ENCODE measurements at regions of chr15 and their contacts with region 1.

Region 1: DNA sequence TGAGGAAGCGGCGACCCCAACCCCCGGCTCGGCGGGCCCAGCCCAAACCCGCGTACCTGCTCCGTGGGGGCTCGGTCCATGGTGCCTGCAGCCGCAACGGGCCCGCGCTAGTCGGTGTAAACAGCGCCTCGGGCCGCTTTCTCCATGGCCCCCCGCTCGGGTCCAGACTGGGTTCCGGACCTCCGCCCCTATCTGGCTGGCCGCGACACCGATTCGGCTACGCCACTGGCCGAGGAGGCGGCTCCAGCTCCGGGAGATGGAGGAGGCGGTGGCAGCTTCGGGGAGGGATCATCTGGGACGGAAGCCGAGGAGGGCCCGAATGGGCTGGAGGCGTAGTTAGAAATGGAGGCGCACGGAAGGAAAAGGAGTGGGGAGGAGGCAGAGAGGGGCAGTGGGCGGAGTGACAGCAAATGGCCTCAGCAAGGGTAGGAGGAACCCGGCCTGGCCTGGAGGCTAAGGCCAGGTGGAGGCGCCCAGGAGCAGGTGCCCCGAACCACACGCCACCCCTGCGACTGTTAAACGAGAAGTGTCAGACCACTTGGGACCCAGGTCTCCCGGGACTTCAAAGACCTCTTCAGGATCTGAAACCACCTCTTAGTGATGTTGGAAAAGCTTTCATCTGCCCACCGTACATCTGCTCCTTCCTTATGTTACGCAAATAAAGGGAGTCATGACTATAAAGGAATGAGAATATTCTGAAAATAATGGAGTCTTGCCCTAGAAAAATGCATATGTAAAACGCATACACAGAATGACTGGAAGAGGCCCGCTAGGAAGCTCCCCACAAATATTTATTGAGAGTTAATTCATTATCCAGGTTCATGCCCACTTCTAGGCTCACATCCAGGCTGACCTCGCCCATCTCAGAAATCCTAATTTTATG is at the start of gene SECISBP2L:
- DNase-seq: peak; percentile 82
- ATAC-seq: peak; percentile 97
- H3K4me3 Mint-ChIP-seq: peak within 1 kb of the TSS; percentile 97
- H3K27ac Mint-ChIP-seq: peak within 1 kb of the TSS; percentile 95
- H3K4me1 Mint-ChIP-seq: peaks cover 36% of the 10 kb centered on the region
- H3K27me3 Mint-ChIP-seq: no peaks in the 10 kb centered on the region
- CTCF ChIP-seq: no peak
- total RNA-seq, gene SECISBP2L: 52.6 and 56.5 TPM in 2 replicates

Region 2: DNA sequence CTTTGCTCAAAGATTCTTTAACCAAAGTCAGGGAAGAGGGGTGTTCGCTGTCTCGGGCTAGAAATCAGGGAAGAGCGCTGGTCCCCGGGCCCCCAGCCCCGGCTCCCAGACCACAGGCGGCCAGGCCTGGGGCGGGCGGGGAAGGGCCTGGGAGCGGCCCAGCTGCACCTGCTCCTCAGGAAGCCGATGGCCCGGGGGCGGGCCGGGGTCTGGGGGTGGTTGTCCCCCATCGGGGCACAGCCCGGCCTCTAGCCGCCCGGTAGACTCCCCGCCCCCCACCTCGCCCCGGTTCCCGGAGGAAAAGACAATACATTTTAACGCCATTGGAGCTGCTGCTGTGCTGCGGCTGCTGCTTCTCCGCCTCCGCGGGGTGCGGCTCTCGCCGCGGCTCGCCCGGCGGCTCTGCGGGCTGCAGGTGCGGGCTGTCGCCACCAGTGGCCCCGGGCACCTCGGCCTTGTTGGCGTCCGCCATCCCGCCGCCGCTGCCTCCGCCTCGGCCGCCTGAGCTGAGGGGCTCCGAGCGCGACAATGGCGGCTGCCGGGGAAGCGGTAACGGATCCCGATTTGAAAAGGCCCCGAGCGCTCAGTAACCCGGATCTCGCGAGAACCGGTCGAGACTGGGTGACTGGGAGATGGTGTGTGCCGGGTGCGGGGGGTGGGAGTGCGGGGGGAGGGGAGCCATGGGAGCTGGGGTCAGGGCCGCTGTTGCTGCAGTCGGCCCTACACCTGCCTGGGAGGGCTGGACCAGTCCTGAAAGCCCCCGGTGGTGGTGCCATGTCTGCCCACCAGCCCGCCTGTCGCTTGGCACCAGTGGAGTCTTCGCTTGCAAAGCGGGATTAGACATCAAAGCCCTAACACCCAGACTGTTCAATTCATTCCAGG is 868.5 kb before region 1 on chr15 and contains the start of gene MYEF2:
- CTCF ChIA-PET with region 1: no interaction called
- POLR2A ChIA-PET with region 1: no interaction called
- intact Hi-C with region 1: loop called (anchors 10 kb)
- DNase-seq: peak; percentile 55
- ATAC-seq: peak; percentile 84
- H3K4me3 Mint-ChIP-seq: peak within 1 kb of the TSS; percentile 94
- H3K27ac Mint-ChIP-seq: peak within 1 kb of the TSS; percentile 90
- H3K4me1 Mint-ChIP-seq: peaks cover 18% of the 10 kb centered on the region
- H3K27me3 Mint-ChIP-seq: peaks cover 13% of the 10 kb centered on the region
- CTCF ChIP-seq: no peak
- total RNA-seq, gene MYEF2: 19.7 and 23.1 TPM in 2 replicates

Region 3: DNA sequence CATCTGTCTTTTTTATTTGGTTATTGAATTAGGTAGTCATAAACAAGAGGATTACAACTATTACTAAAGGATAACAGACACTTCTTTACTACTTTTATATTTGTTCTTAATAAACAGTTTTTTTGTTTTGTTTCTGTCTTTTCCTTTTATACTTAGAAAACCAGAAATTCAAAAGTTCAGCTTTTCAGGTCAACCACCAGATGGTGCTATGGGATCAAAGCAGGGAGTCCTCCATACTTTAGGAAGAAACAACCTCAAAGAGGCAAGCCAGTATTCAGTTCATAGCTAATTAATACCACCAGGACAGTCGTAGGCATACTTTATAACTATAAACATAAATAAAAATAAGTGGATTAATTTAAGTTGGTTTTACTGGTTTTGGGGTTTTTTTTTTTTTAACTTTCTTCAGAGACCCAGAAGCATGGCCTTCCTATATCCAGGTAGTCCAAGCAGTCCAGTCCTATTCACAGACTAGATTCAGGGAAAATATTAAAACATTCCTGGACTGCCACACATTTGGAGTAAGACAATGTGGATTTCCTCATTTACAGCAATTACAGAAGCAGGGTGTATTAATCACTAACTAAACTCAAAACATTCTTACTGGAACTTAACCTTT is 184.5 kb before region 1 on chr15:
- CTCF ChIA-PET with region 1: no interaction called
- POLR2A ChIA-PET with region 1: no interaction called
- intact Hi-C with region 1: loop called (anchors 5 kb)
- DNase-seq: no peak
- ATAC-seq: peak; percentile 57
- H3K4me3 Mint-ChIP-seq: no peak overlapping the region
- H3K27ac Mint-ChIP-seq: no peak overlapping the region
- H3K4me1 Mint-ChIP-seq: no peaks in the 10 kb centered on the region
- H3K27me3 Mint-ChIP-seq: peaks cover 15% of the 10 kb centered on the region
- CTCF ChIP-seq: peak; percentile 47

Region 4: GRCh38 chr15:49145651-49146609 is 99.5 kb after region 1 on chr15:
- CTCF ChIA-PET with region 1: interaction called, 12 read pairs
- POLR2A ChIA-PET with region 1: no interaction called
- intact Hi-C with region 1: loop called (anchors 1 kb)
- DNase-seq: no peak
- ATAC-seq: no peak
- H3K4me3 Mint-ChIP-seq: no peak overlapping the region
- H3K27ac Mint-ChIP-seq: peak overlapping the region; percentile 3
- H3K4me1 Mint-ChIP-seq: peaks cover 40% of the 10 kb centered on the region
- H3K27me3 Mint-ChIP-seq: no peaks in the 10 kb centered on the region
- CTCF ChIP-seq: no peak

Region 5: GRCh38 chr15:49421991-49422390 is 375.5 kb after region 1 on chr15:
- CTCF ChIA-PET with region 1: no interaction called
- POLR2A ChIA-PET with region 1: no interaction called
- intact Hi-C with region 1: loop called (anchors 5 kb)
- DNase-seq: peak; percentile 18
- ATAC-seq: peak; percentile 42
- H3K4me3 Mint-ChIP-seq: no peak overlapping the region
- H3K27ac Mint-ChIP-seq: no peak overlapping the region
- H3K4me1 Mint-ChIP-seq: peaks cover 3% of the 10 kb centered on the region
- H3K27me3 Mint-ChIP-seq: peaks cover 3% of the 10 kb centered on the region
- CTCF ChIP-seq: no peak

Region 6: GRCh38 chr15:50424066-50424890 is 1377.8 kb after region 1 on chr15 and contains the start of gene USP8:
- CTCF ChIA-PET with region 1: no interaction called
- POLR2A ChIA-PET with region 1: no interaction called
- intact Hi-C with region 1: loop called (anchors 1 kb)
- DNase-seq: peak; percentile 90
- ATAC-seq: peak; percentile 98
- H3K4me3 Mint-ChIP-seq: peak within 1 kb of the TSS; percentile 90
- H3K27ac Mint-ChIP-seq: peak within 1 kb of the TSS; percentile 89
- H3K4me1 Mint-ChIP-seq: peaks cover 44% of the 10 kb centered on the region
- H3K27me3 Mint-ChIP-seq: no peaks in the 10 kb centered on the region
- CTCF ChIP-seq: no peak
- total RNA-seq, gene USP8: 71.3 and 78.3 TPM in 2 replicates

Measured in activated B cell treated with CpG ODN at 0.5 μM for 24 hours (primary cell).